H1 (cell line): ENCODE measurements at regions of chr17 and their contacts with region 1.

Region 1: GRCh38 chr17:74296548-74296936 is 22.5 kb downstream of the DNAI2 start:
- DNase-seq: peak; percentile 23 to 58
- H3K4me3 ChIP-seq: no peak overlapping the region
- H3K27ac ChIP-seq: no peak overlapping the region
- H3K4me1 ChIP-seq: no peaks in the 10 kb centered on the region
- H3K27me3 ChIP-seq: no peaks in the 10 kb centered on the region; a peak in 1 of 7 replicates
- CTCF ChIP-seq: peak; percentile 60 to 80 (median 76)
- EP300 ChIP-seq: no peak
- POLR2A ChIP-seq: no peak
- RAD21 ChIP-seq: peak; percentile 43 to 70; a peak in 3 of 4 replicates

Region 2: GRCh38 chr17:74220946-74221818 is 75.4 kb before region 1 on chr17:
- CTCF ChIA-PET with region 1: interaction called, 12 read pairs
- POLR2A ChIA-PET with region 1: no interaction called
- DNase-seq: no peak
- H3K4me3 ChIP-seq: no peak overlapping the region
- H3K27ac ChIP-seq: no peak overlapping the region
- H3K4me1 ChIP-seq: no peaks in the 10 kb centered on the region; a peak in 1 of 7 replicates
- H3K27me3 ChIP-seq: no peaks in the 10 kb centered on the region
- CTCF ChIP-seq: no peak
- EP300 ChIP-seq: no peak
- POLR2A ChIP-seq: no peak
- RAD21 ChIP-seq: no peak

Region 3: DNA sequence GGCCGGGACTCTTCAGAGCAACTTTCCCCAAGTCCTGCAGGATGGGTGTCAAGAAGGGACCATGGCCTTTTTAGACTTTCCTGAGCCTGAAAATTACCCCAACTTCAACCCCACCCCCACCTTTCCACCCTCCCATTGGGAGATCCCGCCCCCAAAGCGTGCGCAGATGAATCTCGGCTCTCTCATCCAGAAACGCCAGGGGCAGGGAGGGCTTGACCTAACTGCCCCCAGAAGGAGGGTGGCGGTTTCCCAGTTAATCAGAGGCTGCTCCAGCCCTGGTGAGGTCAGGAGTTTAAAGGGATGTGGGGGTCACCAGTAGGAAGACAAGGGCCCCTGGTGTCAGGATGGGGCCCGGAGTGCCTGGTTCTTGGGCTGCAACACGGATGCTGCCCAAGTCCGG is 30.0 kb after region 1 on chr17:
- CTCF ChIA-PET with region 1: interaction called, 11 read pairs
- POLR2A ChIA-PET with region 1: no interaction called
- DNase-seq: no peak
- H3K4me3 ChIP-seq: peak overlapping the region; percentile 45 to 61 (median 50)
- H3K27ac ChIP-seq: no peak overlapping the region
- H3K4me1 ChIP-seq: peaks cover 6 to 14% (median 12%) of the 10 kb centered on the region in 4 experiments; a peak in 6 of 7 replicates
- H3K27me3 ChIP-seq: peaks cover 3 to 35% (median 27%) of the 10 kb centered on the region in 4 experiments
- CTCF ChIP-seq: no peak
- EP300 ChIP-seq: no peak
- POLR2A ChIP-seq: no peak
- RAD21 ChIP-seq: no peak

Region 4: GRCh38 chr17:74490716-74491115 is 194.2 kb after region 1 on chr17:
- CTCF ChIA-PET with region 1: no interaction called
- POLR2A ChIA-PET with region 1: no interaction called
- DNase-seq: no peak
- H3K4me3 ChIP-seq: no peak overlapping the region
- H3K27ac ChIP-seq: no peak overlapping the region
- H3K4me1 ChIP-seq: no peaks in the 10 kb centered on the region
- H3K27me3 ChIP-seq: no peaks in the 10 kb centered on the region
- CTCF ChIP-seq: no peak
- EP300 ChIP-seq: no peak
- POLR2A ChIP-seq: no peak
- RAD21 ChIP-seq: no peak